CD8-positive, alpha-beta T cell (primary cell): ENCODE measurements at regions of chr5 and their contacts with region 1.

Region 1: DNA sequence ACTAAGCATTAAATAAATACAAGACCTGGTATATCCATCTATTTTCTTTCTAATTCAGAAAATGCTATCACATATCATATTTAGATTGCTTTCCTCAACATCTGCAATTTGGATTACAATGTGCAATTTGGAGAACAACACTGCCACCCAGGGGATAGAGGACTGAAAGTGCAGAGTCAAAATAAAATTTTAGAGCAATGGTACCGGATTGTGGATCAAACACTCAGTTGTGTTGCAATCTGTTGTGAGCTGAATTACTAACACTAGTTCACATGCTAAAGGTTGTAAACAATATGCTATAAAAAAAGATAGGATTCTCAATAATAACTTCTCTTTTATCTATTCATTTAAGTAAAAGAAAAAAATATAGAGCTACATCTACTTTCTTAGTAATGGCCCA is 11.9 kb upstream of the SRFBP1 start:
- DNase-seq: peak in 2 of 9 experiments; percentile 25 to 40
- ATAC-seq: no peak
- H3K4me3 ChIP-seq: no peak overlapping the region
- H3K4me3 Mint-ChIP-seq: no peak overlapping the region
- H3K27ac ChIP-seq: no peak overlapping the region
- H3K27ac Mint-ChIP-seq: no peak overlapping the region
- H3K4me1 ChIP-seq: no peaks in the 10 kb centered on the region
- H3K4me1 Mint-ChIP-seq: no peaks in the 10 kb centered on the region
- H3K27me3 ChIP-seq: no peaks in the 10 kb centered on the region
- H3K27me3 Mint-ChIP-seq: peaks cover 6% of the 10 kb centered on the region
- CTCF ChIP-seq: peak; percentile 55

Region 2: DNA sequence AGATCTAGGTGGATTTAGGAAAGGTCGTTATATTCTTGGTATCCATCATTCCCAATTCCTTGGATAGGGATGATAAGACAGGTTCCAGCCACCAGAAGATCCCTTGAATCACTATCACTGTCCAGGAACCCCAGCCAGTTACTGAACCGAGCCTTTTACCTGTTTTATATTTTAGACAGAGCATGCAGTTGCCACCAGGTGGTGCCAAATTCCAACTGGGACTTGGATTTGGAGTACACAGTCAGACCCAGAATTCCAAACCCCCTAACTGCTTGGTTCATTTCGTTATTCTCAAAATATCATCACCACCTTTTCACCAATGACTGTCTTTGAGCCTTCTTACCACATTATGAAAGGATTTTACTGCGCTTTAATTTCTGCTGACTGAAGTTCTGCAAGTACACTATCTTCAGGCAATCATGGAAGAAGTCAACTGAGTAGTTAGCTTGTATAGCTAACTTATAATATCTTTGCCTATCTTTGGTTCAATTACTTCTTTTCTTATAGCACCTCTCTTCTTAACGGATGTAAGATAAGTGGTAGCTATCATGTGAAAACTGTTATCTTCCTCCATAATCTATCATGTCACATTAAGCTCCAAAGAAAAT is 1293.9 kb before region 1 on chr5:
- CTCF ChIA-PET with region 1: no interaction called
- POLR2A ChIA-PET with region 1: no interaction called
- intact Hi-C with region 1: loop called (anchors 5 to 10 kb)
- DNase-seq: peak in 1 of 9 experiments; percentile 0
- ATAC-seq: no peak
- H3K4me3 ChIP-seq: no peak overlapping the region
- H3K4me3 Mint-ChIP-seq: no peak overlapping the region
- H3K27ac ChIP-seq: no peak overlapping the region
- H3K27ac Mint-ChIP-seq: no peak overlapping the region
- H3K4me1 ChIP-seq: no peaks in the 10 kb centered on the region
- H3K4me1 Mint-ChIP-seq: no peaks in the 10 kb centered on the region
- H3K27me3 ChIP-seq: no peaks in the 10 kb centered on the region
- H3K27me3 Mint-ChIP-seq: no peaks in the 10 kb centered on the region
- CTCF ChIP-seq: no peak

Region 3: GRCh38 chr5:121870489-121870888 is 79.4 kb before region 1 on chr5:
- CTCF ChIA-PET with region 1: no interaction called
- POLR2A ChIA-PET with region 1: no interaction called
- intact Hi-C with region 1: no loop called
- DNase-seq: no peak
- ATAC-seq: no peak
- H3K4me3 ChIP-seq: no peak overlapping the region
- H3K4me3 Mint-ChIP-seq: no peak overlapping the region
- H3K27ac ChIP-seq: no peak overlapping the region
- H3K27ac Mint-ChIP-seq: no peak overlapping the region
- H3K4me1 ChIP-seq: no peaks in the 10 kb centered on the region
- H3K4me1 Mint-ChIP-seq: no peaks in the 10 kb centered on the region
- H3K27me3 ChIP-seq: no peaks in the 10 kb centered on the region
- H3K27me3 Mint-ChIP-seq: no peaks in the 10 kb centered on the region
- CTCF ChIP-seq: no peak

Region 4: GRCh38 chr5:121962347-121962670 is 12.4 kb after region 1 on chr5:
- CTCF ChIA-PET with region 1: interaction called, 14 read pairs
- POLR2A ChIA-PET with region 1: interaction called, 7 read pairs
- intact Hi-C with region 1: no loop called
- DNase-seq: no peak
- ATAC-seq: no peak
- H3K4me3 ChIP-seq: peak overlapping the region; percentile 87
- H3K4me3 Mint-ChIP-seq: peak overlapping the region; percentile 96
- H3K27ac ChIP-seq: peak overlapping the region; percentile 74 to 79
- H3K27ac Mint-ChIP-seq: peak overlapping the region; percentile 94
- H3K4me1 ChIP-seq: peaks cover 12% of the 10 kb centered on the region
- H3K4me1 Mint-ChIP-seq: peaks cover 44% of the 10 kb centered on the region
- H3K27me3 ChIP-seq: no peaks in the 10 kb centered on the region
- H3K27me3 Mint-ChIP-seq: peaks cover 10% of the 10 kb centered on the region
- CTCF ChIP-seq: no peak